ENCODE measurements at regions of chr20 and their contacts with region 1.

Region 1: GRCh38 chr20:1437235-1437904 is 29.3 kb downstream of the NSFL1C start:
- DNase-seq: peak; percentile 55 to 81 (median 58)
- ATAC-seq: peak; percentile 56
- H3K4me3 ChIP-seq: no peak overlapping the region
- H3K27ac ChIP-seq: no peak overlapping the region
- H3K4me1 ChIP-seq: peaks cover 0 to 16% of the 10 kb centered on the region in 2 experiments; a peak in 2 of 5 replicates
- H3K27me3 ChIP-seq: no peaks in the 10 kb centered on the region
- CTCF ChIP-seq: peak; percentile 76 to 81 (median 79)
- EP300 ChIP-seq: no peak
- POLR2A ChIP-seq: no peak
- RAD21 ChIP-seq: peak; percentile 66 to 82

Region 2: DNA sequence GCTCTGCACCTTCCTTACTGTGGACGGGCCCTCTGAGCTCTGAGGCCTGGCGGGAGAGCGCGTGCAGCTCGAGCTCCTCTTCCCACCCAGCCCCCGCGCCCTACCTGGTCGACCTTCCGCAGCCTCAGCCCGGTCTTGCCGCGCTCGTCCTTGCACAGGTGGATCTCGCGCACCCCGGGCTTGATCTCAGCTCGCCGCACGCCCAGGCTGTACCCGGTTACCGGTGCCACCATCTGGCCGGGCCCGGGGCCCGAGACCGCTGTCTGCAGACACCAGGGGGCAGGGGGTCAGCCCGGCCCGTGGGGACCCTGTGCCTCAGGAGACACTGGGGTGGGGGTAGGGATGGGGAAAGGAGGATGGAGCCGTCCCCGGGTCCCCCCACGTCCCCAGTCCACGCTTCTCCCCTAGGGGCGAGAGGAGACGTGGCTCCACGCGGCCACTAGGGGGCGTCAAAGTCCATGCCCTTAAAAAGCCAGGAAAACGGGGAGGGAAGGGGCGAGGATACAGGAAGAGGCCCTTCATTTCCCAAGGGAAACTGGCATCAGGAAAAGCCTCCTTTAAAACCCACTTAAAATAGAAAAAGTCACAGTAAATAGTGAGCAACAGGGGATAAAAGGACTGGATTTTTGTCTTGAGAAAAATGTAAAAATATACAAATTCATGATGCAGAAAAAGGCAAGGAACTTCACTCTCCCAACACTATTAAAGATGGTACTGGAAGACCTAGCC is 124.0 kb before region 1 on chr20:
- CTCF ChIA-PET with region 1: interaction called, 8 read pairs
- POLR2A ChIA-PET with region 1: no interaction called
- in situ Hi-C with region 1: no loop called
- intact Hi-C with region 1: loop called (anchors 1 kb)
- DNase-seq: peak; percentile 70 to 75 (median 72)
- ATAC-seq: peak; percentile 87
- H3K4me3 ChIP-seq: no peak overlapping the region
- H3K27ac ChIP-seq: no peak overlapping the region
- H3K4me1 ChIP-seq: peaks cover 0 to 13% of the 10 kb centered on the region in 2 experiments; a peak in 3 of 5 replicates
- H3K27me3 ChIP-seq: no peaks in the 10 kb centered on the region
- CTCF ChIP-seq: peak; percentile 76 to 86 (median 84)
- EP300 ChIP-seq: no peak
- POLR2A ChIP-seq: no peak
- RAD21 ChIP-seq: peak; percentile 55 to 81

Region 3: DNA sequence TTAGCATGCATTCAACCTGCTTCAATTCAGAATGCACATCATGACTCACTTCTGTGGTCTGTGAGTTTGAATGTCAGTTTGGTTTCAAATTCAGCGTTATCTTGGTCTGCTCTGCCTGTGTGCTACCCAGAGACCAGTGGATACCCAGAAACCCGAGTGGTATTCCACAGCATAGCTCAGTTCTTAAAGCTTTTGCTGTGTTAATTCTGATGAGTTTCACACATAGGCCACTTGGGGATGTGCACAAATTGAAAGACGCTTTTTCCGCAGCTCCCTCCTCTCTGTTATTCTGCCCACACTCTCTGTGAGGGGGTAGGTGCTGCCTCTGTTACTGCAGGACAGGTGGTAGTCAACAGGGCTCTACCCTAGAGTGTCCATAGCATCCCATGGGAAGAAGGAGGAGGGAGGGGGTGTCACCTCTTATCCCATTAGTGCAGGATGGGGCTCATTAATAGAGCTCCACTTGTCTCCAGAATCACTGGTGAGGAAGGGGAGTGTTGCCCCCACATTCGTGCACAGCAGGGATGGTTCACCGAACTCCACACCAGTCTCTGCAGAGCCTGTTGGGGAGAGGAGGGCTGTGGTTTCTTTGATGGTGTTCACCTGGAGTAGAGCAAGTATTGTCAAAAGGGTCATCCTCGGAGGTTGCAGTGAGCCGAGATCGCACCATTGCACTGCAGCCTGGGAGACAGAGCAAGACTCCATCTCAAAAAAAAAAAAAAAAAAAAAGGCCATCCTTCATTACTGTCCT is 79.3 kb before region 1 on chr20:
- CTCF ChIA-PET with region 1: no interaction called
- POLR2A ChIA-PET with region 1: no interaction called
- in situ Hi-C with region 1: no loop called
- intact Hi-C with region 1: no loop called
- DNase-seq: no peak
- ATAC-seq: no peak
- H3K4me3 ChIP-seq: no peak overlapping the region
- H3K27ac ChIP-seq: no peak overlapping the region
- H3K4me1 ChIP-seq: no peaks in the 10 kb centered on the region
- H3K27me3 ChIP-seq: no peaks in the 10 kb centered on the region
- CTCF ChIP-seq: no peak
- EP300 ChIP-seq: no peak
- POLR2A ChIP-seq: no peak
- RAD21 ChIP-seq: no peak

Region 4: GRCh38 chr20:1392823-1393506 is 44.4 kb before region 1 on chr20 and contains the start of gene FKBP1A:
- CTCF ChIA-PET with region 1: interaction called, 4 read pairs
- POLR2A ChIA-PET with region 1: no interaction called
- in situ Hi-C with region 1: no loop called
- intact Hi-C with region 1: loop called (anchors 5 kb)
- DNase-seq: peak; percentile 87 to 92 (median 90)
- ATAC-seq: peak; percentile 95
- H3K4me3 ChIP-seq: peak within 1 kb of the TSS; percentile 93
- H3K27ac ChIP-seq: peak within 1 kb of the TSS; percentile 66
- H3K4me1 ChIP-seq: peaks cover 14 to 23% of the 10 kb centered on the region in 2 experiments; a peak in 4 of 5 replicates
- H3K27me3 ChIP-seq: no peaks in the 10 kb centered on the region; a peak in 1 of 5 replicates
- CTCF ChIP-seq: peak in 1 of 3 experiments; percentile 5; a peak in 1 of 6 replicates
- EP300 ChIP-seq: no peak
- POLR2A ChIP-seq: peak; percentile 54; the same call in 1 of the 2 replicates
- RAD21 ChIP-seq: 0 out of 4 replicates have a peak, but pooled peaks of 1 of the 2 experiments have one; percentile 2
- polyA plus RNA-seq, gene FKBP1A: 63.5 to 82.4 TPM

Region 5: GRCh38 chr20:1423625-1424106 is 13.7 kb before region 1 on chr20:
- CTCF ChIA-PET with region 1: no interaction called
- POLR2A ChIA-PET with region 1: no interaction called
- in situ Hi-C with region 1: no loop called
- intact Hi-C with region 1: loop called (anchors 1 kb)
- DNase-seq: peak; percentile 41 to 84 (median 48)
- ATAC-seq: peak; percentile 99
- H3K4me3 ChIP-seq: no peak overlapping the region
- H3K27ac ChIP-seq: peak overlapping the region; percentile 32
- H3K4me1 ChIP-seq: peaks cover 4 to 15% of the 10 kb centered on the region in 2 experiments; a peak in 3 of 5 replicates
- H3K27me3 ChIP-seq: no peaks in the 10 kb centered on the region
- CTCF ChIP-seq: peak; percentile 58 to 76 (median 69)
- EP300 ChIP-seq: no peak
- POLR2A ChIP-seq: no peak
- RAD21 ChIP-seq: peak; percentile 57 to 74

Region 6: GRCh38 chr20:1448081-1448620 is 10.8 kb after region 1 on chr20:
- CTCF ChIA-PET with region 1: no interaction called
- POLR2A ChIA-PET with region 1: interaction called, 12 read pairs
- in situ Hi-C with region 1: no loop called
- intact Hi-C with region 1: no loop called
- DNase-seq: no peak
- ATAC-seq: no peak
- H3K4me3 ChIP-seq: no peak overlapping the region
- H3K27ac ChIP-seq: no peak overlapping the region
- H3K4me1 ChIP-seq: no peaks in the 10 kb centered on the region
- H3K27me3 ChIP-seq: no peaks in the 10 kb centered on the region
- CTCF ChIP-seq: no peak
- EP300 ChIP-seq: no peak
- POLR2A ChIP-seq: no peak
- RAD21 ChIP-seq: no peak

Region 7: GRCh38 chr20:1466211-1467081 is 29.1 kb after region 1 on chr20 and contains the start of gene NSFL1C:
- CTCF ChIA-PET with region 1: interaction called, 3 read pairs
- POLR2A ChIA-PET with region 1: interaction called, 3 read pairs
- in situ Hi-C with region 1: no loop called
- intact Hi-C with region 1: loop called (anchors 2 kb)
- DNase-seq: peak; percentile 84 to 93 (median 88)
- ATAC-seq: peak; percentile 91
- H3K4me3 ChIP-seq: peak within 1 kb of the TSS; percentile 97
- H3K27ac ChIP-seq: peak within 1 kb of the TSS; percentile 94
- H3K4me1 ChIP-seq: peaks cover 18 to 40% of the 10 kb centered on the region in 2 experiments
- H3K27me3 ChIP-seq: no peaks in the 10 kb centered on the region
- CTCF ChIP-seq: peak; percentile 67 to 88 (median 82)
- EP300 ChIP-seq: no peak; the same call in 1 of the 2 replicates
- POLR2A ChIP-seq: peak; percentile 80
- RAD21 ChIP-seq: peak; percentile 34 to 43; a peak in 3 of 4 replicates
- polyA plus RNA-seq, gene NSFL1C: 39.3 to 47.0 TPM

Region 8: GRCh38 chr20:1503564-1504227 is 66.3 kb after region 1 on chr20:
- CTCF ChIA-PET with region 1: no interaction called
- POLR2A ChIA-PET with region 1: interaction called, 3 read pairs
- in situ Hi-C with region 1: no loop called
- intact Hi-C with region 1: loop called (anchors 1 kb)
- DNase-seq: peak; percentile 72 to 82 (median 74)
- ATAC-seq: peak; percentile 100
- H3K4me3 ChIP-seq: no peak overlapping the region
- H3K27ac ChIP-seq: no peak overlapping the region
- H3K4me1 ChIP-seq: no peaks in the 10 kb centered on the region; a peak in 1 of 5 replicates
- H3K27me3 ChIP-seq: 0 out of 5 replicates have a peak, but pooled peaks cover 0 to 6% of the 10 kb centered on the region in 2 experiments
- CTCF ChIP-seq: peak; percentile 96 to 100 (median 100)
- EP300 ChIP-seq: no peak
- POLR2A ChIP-seq: no peak
- RAD21 ChIP-seq: peak; percentile 95

Region 9: DNA sequence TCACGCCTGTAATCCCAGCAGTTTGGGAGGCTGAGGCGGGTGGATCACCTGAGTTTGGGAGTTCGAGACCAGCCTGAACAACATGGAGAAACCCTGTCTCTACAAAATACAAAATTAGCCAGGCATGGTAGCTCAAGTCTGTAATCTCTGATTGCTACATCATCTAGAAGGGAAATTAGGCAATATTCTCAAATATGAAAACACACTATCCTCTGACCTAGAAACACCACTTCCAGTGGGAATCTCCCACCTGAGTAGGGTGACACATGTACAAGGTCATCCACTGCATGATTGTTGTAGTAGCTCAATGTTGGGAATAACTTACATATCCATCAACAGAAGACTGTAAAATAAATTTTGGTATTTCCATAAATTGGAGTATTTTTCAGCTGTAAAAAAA is 139.3 kb after region 1 on chr20:
- CTCF ChIA-PET with region 1: no interaction called
- POLR2A ChIA-PET with region 1: no interaction called
- in situ Hi-C with region 1: no loop called
- intact Hi-C with region 1: no loop called
- DNase-seq: no peak
- ATAC-seq: no peak
- H3K4me3 ChIP-seq: no peak overlapping the region
- H3K27ac ChIP-seq: no peak overlapping the region
- H3K4me1 ChIP-seq: no peaks in the 10 kb centered on the region
- H3K27me3 ChIP-seq: no peaks in the 10 kb centered on the region; a peak in 1 of 5 replicates
- CTCF ChIP-seq: no peak
- EP300 ChIP-seq: no peak
- POLR2A ChIP-seq: no peak
- RAD21 ChIP-seq: no peak

Measured in K562 (cell line).